Right ventricle myocardium superior (tissue), 1 donor: ENCODE measurements at regions of chr10 and their contacts with region 1.

Region 1: DNA sequence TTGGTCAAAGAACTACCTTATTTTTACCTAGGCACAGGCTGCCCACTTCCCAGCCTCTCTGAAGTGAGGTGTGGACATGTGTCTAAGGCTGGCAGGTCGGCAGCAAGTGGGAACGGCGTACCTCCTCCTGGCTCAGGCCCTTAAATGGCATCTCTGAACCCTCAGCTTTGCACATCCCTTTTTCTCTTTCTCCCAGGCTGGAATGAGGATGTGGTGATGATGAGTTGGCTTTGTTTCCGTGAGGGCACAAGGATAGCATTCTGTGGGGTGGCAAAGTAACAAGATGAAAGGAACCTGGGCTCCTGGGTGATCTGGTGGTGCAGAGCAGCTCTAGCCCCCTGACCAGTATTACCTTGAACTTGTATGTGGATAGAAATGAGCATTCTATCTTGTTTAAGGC is 196.8 kb downstream of the REEP3 start:
- DNase-seq: no peak
- ATAC-seq: no peak

Region 2: GRCh38 chr10:63166742-63167258 is 551.2 kb before region 1 on chr10:
- intact Hi-C with region 1: loop called (anchors 5 kb)
- DNase-seq: no peak
- ATAC-seq: peak; percentile 70

Region 3: DNA sequence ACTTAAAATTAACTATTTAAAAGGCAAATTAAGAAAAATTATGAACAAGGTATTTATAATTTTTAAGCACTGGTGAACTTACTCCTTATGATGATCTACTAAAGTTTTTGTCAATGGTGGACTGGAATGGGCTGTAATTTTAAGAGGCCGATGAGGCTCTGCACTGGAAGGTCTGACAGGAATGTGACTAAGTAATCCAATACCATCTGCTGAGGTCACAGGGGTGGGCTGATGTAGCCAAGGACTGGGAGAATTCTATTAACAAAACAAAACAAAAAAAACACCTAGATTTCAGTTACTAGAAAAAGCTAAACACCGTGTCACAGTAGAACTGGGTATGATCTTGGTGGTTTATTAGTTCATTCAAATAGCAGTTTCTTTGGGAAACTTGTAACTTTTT is 509.0 kb before region 1 on chr10:
- intact Hi-C with region 1: loop called (anchors 2 kb)
- DNase-seq: no peak
- ATAC-seq: no peak

Region 4: DNA sequence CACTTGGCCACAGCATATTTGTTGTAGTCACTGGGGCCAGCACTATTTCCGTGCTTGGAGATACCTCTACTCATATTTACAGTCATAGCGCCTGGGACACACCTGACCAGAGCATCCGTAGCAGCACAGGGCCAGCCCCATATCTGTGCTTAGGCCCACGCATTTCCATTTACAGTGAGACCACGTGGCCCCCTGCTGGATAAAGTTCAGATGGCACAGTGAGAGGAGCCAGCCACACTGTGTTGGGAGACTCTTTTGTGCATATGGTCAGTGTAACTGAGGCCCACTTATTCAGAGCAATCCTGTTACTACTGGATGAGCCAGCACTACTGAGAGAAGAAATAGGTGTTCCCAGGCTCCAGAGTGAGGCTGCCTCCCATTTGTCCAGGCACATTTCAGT is 258.5 kb after region 1 on chr10:
- intact Hi-C with region 1: no loop called
- DNase-seq: no peak
- ATAC-seq: peak; percentile 55